Heart right ventricle (tissue), 16 donors: ENCODE measurements at regions of chr12 and their contacts with region 1.

Region 1: GRCh38 chr12:66107451-66107915 is 23.1 kb downstream of the LLPH start:
- DNase-seq: peak in 1 of 2 donors; percentile 76
- ATAC-seq: peak; percentile 53 to 86 (median 74)
- H3K4me3 ChIP-seq: no peak overlapping the region
- H3K27ac ChIP-seq: no peak overlapping the region
- H3K4me1 ChIP-seq: peaks cover 0 to 7% (median 0%) of the 10 kb centered on the region in 9 donors
- H3K27me3 ChIP-seq: no peaks in the 10 kb centered on the region
- CTCF ChIP-seq: peak; percentile 69 to 89 (median 79)

Region 2: GRCh38 chr12:64883596-64884542 is 1223.6 kb before region 1 on chr12:
- intact Hi-C with region 1: loop called in 2 of 10 experiments (anchors 5 to 10 kb)
- DNase-seq: no peak
- ATAC-seq: no peak
- H3K4me3 ChIP-seq: no peak overlapping the region
- H3K27ac ChIP-seq: no peak overlapping the region
- H3K4me1 ChIP-seq: no peaks in the 10 kb centered on the region
- H3K27me3 ChIP-seq: peaks cover 0 to 4% (median 0%) of the 10 kb centered on the region in 7 donors
- CTCF ChIP-seq: no peak

Region 3: DNA sequence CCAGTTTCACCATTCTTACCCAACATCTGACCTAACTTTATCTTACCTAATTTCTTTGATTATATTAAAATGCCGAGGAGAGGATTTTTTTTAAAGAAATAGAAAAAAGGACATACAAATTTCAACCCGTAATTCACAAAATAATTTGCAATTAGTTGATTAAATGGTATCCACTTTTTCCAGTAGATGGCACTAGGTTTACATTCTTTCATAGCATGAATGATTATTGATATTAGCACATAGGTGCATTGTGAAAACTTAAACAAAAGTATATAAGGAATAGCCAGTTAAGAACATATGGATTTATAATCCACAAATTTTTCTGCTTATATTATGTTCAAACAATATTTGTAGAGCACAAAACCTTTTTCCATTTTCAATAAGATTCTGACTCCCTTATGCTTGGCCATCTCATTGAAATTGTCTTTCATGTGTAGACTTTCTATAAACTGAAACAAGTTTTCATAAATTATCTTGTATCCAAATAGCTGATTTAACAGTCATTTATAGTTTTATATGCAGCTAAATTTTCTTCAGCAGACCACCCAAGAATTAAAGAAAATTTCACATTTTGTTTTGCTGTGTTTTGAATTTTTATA is 793.7 kb before region 1 on chr12:
- intact Hi-C with region 1: loop called in 1 of 10 experiments (anchors 10 kb)
- DNase-seq: no peak
- ATAC-seq: no peak
- H3K4me3 ChIP-seq: no peak overlapping the region
- H3K27ac ChIP-seq: no peak overlapping the region
- H3K4me1 ChIP-seq: peaks cover 0 to 5% (median 2%) of the 10 kb centered on the region in 9 donors
- H3K27me3 ChIP-seq: no peaks in the 10 kb centered on the region
- CTCF ChIP-seq: peak in 7 of 9 donors; percentile 35 to 62 (median 48)

Region 4: GRCh38 chr12:66768293-66768692 is 660.8 kb after region 1 on chr12:
- intact Hi-C with region 1: no loop called
- DNase-seq: no peak
- ATAC-seq: no peak
- H3K4me3 ChIP-seq: no peak overlapping the region
- H3K27ac ChIP-seq: no peak overlapping the region
- H3K4me1 ChIP-seq: no peaks in the 10 kb centered on the region
- H3K27me3 ChIP-seq: no peaks in the 10 kb centered on the region
- CTCF ChIP-seq: no peak